CD8-positive, alpha-beta T cell (primary cell): ENCODE measurements at regions of chr17 and their contacts with region 1.

Region 1: DNA sequence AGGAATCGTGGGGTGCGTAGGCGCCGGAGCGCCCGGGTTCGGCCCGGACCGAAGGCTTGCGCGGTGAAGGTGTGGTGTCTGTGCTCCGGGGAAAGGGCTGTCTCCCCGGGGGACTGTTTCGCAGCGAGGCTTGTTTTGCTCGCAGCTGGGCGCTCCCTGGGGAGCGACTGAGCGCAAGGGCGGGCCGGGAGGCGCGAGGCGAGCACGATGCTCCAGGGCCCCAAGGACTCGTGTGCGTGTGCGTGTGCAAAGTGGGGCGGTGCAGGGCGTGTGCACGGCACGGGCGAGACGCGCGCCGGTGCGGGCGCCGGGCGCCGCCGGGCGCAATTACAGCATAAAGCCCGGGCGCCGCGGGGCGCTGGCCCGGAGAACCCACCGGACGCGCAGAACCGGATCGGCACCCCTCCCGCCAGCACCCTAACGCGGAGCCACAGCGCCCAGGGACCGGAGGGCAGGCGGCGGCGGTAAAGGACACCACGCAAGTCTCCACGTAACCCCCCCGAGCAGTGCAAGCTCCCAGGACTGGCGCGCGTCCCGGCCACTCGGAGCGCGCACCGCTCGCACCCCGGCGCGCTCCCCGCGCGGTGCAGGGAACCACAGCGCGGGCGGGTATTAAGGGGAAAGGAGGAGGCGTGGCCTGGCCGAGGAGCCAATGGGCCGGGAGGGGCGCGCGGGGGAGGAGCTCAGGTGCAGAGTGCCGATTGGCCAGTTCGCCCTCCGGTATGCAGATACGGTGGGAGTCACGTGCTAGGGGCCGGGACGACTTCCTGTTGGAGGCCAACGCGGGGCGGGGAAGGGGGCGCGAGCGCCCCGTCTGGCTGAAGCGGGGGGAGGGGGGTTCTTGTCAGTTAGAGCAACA is at the start of gene TNRC6C:
- DNase-seq: peak; percentile 99 to 100 (median 100)
- ATAC-seq: peak; percentile 86
- H3K4me3 ChIP-seq: peak within 1 kb of the TSS; percentile 74 to 81
- H3K4me3 Mint-ChIP-seq: peak within 1 kb of the TSS; percentile 97
- H3K27ac ChIP-seq: peak within 1 kb of the TSS; percentile 57 to 79
- H3K27ac Mint-ChIP-seq: peak within 1 kb of the TSS; percentile 97
- H3K4me1 ChIP-seq: peaks cover 37% of the 10 kb centered on the region
- H3K4me1 Mint-ChIP-seq: peaks cover 38% of the 10 kb centered on the region
- H3K27me3 ChIP-seq: no peaks in the 10 kb centered on the region
- H3K27me3 Mint-ChIP-seq: no peaks in the 10 kb centered on the region
- CTCF ChIP-seq: no peak
- total RNA-seq, gene TNRC6C: 49.3 to 53.8 TPM

Region 2: GRCh38 chr17:77609553-77610517 is 348.3 kb before region 1 on chr17:
- CTCF ChIA-PET with region 1: no interaction called
- POLR2A ChIA-PET with region 1: interaction called, 19 read pairs
- intact Hi-C with region 1: loop called in 1 of 2 experiments (anchors 1 kb)
- DNase-seq: peak; percentile 34 to 88 (median 64)
- ATAC-seq: peak; percentile 96
- H3K4me3 ChIP-seq: peak overlapping the region; percentile 23 to 42
- H3K4me3 Mint-ChIP-seq: peak overlapping the region; percentile 78
- H3K27ac ChIP-seq: peak overlapping the region; percentile 51 to 75
- H3K27ac Mint-ChIP-seq: peak overlapping the region; percentile 90
- H3K4me1 ChIP-seq: peaks cover 22% of the 10 kb centered on the region
- H3K4me1 Mint-ChIP-seq: peaks cover 29% of the 10 kb centered on the region
- H3K27me3 ChIP-seq: no peaks in the 10 kb centered on the region
- H3K27me3 Mint-ChIP-seq: no peaks in the 10 kb centered on the region
- CTCF ChIP-seq: no peak

Region 3: DNA sequence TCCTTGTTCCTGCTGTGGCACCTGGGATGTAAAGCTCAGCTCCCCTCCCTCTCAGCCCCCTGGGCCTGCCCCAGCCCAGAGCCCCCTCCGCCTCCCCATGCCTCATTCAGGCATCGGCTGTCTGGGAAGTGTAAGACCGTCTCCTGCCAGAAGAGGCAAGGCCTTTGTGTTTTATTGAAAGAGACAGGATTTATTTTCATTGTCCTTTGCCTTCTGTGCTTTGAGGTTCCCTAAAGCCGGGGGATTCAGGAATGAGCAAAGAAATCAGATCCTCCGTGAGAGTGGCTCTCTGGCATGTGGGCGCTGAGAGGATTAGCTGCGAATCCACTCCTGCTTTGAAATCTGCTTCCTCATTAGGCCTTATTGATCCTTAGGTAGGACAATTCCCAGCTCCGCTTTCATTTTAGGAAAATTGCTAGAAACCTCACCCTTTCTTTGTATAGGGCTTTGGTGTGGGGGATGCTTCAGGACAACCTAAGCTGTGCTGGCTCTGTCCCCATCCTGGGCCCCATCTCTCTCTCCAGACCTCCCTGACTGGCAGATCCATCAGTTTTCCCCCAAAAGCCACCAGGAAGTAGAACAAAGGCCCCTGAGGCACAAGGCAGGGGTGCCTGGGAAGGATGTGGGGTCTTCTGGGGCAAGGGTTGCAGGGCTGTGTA is 211.1 kb before region 1 on chr17:
- CTCF ChIA-PET with region 1: no interaction called
- POLR2A ChIA-PET with region 1: no interaction called
- intact Hi-C with region 1: no loop called
- DNase-seq: no peak
- ATAC-seq: no peak
- H3K4me3 ChIP-seq: no peak overlapping the region
- H3K4me3 Mint-ChIP-seq: no peak overlapping the region
- H3K27ac ChIP-seq: no peak overlapping the region
- H3K27ac Mint-ChIP-seq: no peak overlapping the region
- H3K4me1 ChIP-seq: no peaks in the 10 kb centered on the region
- H3K4me1 Mint-ChIP-seq: no peaks in the 10 kb centered on the region
- H3K27me3 ChIP-seq: no peaks in the 10 kb centered on the region
- H3K27me3 Mint-ChIP-seq: no peaks in the 10 kb centered on the region
- CTCF ChIP-seq: no peak

Region 4: DNA sequence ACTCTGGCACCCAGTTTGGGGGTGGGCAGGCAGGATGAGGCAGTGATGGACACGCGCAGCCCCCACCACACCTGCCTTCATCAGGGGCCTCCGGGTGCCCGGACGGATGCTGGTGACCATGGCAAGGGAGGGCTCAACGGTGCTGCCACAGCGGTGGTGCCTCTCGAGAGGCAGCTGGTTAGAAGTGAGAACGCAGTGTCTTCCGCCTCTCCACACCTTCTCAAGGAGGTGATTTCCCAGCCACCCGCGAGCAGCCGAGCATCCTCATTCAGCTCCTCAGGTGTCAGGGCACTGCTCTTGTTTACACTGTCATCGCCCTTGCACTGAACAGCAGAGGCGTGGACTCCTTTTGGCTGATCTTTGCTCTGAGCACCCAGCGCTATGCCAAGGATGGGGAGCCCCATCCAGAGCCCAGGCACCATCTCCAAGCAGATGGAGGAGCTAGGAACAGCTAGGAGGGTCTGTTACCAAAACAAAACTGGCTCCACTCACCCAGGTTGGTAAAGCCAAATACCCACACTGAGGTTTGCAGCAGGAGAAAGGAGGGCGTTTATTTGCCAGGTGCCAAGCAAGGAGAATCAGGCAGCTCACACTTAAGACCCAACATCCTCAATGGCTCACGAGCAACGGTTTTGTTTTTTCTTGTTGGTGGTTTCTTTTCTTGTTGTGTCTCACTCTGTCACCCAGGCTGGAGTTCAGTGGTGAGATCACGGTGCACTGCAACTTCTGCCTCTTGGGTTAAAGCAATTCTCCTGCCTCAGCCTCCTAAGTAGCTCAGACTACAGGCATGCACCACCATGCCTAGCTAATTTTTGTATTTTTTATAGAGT is 173.9 kb before region 1 on chr17:
- CTCF ChIA-PET with region 1: no interaction called
- POLR2A ChIA-PET with region 1: interaction called, 25 read pairs
- intact Hi-C with region 1: no loop called
- DNase-seq: peak; percentile 54 to 95 (median 70)
- ATAC-seq: peak; percentile 89
- H3K4me3 ChIP-seq: peak overlapping the region in 1 of 2 experiments; percentile 14
- H3K4me3 Mint-ChIP-seq: peak overlapping the region; percentile 60
- H3K27ac ChIP-seq: peak overlapping the region; percentile 65 to 89
- H3K27ac Mint-ChIP-seq: peak overlapping the region; percentile 94
- H3K4me1 ChIP-seq: peaks cover 15% of the 10 kb centered on the region
- H3K4me1 Mint-ChIP-seq: peaks cover 23% of the 10 kb centered on the region
- H3K27me3 ChIP-seq: no peaks in the 10 kb centered on the region
- H3K27me3 Mint-ChIP-seq: no peaks in the 10 kb centered on the region
- CTCF ChIP-seq: no peak

Region 5: GRCh38 chr17:77887464-77888241 is 70.4 kb before region 1 on chr17:
- CTCF ChIA-PET with region 1: interaction called, 7 read pairs
- POLR2A ChIA-PET with region 1: interaction called, 138 read pairs
- intact Hi-C with region 1: loop called (anchors 1 kb)
- DNase-seq: peak; percentile 64 to 96 (median 84)
- ATAC-seq: peak; percentile 93
- H3K4me3 ChIP-seq: peak overlapping the region; percentile 54 to 66
- H3K4me3 Mint-ChIP-seq: peak overlapping the region; percentile 92
- H3K27ac ChIP-seq: peak overlapping the region; percentile 87 to 90
- H3K27ac Mint-ChIP-seq: peak overlapping the region; percentile 99
- H3K4me1 ChIP-seq: peaks cover 41% of the 10 kb centered on the region
- H3K4me1 Mint-ChIP-seq: peaks cover 59% of the 10 kb centered on the region
- H3K27me3 ChIP-seq: no peaks in the 10 kb centered on the region
- H3K27me3 Mint-ChIP-seq: no peaks in the 10 kb centered on the region
- CTCF ChIP-seq: no peak

Region 6: GRCh38 chr17:77968788-77969187 is 10.7 kb after region 1 on chr17:
- CTCF ChIA-PET with region 1: interaction called, 4 read pairs
- POLR2A ChIA-PET with region 1: interaction called, 24 read pairs
- intact Hi-C with region 1: no loop called
- DNase-seq: no peak
- ATAC-seq: no peak
- H3K4me3 ChIP-seq: no peak overlapping the region
- H3K4me3 Mint-ChIP-seq: no peak overlapping the region
- H3K27ac ChIP-seq: no peak overlapping the region
- H3K27ac Mint-ChIP-seq: no peak overlapping the region
- H3K4me1 ChIP-seq: peaks cover 73% of the 10 kb centered on the region
- H3K4me1 Mint-ChIP-seq: peaks cover 84% of the 10 kb centered on the region
- H3K27me3 ChIP-seq: no peaks in the 10 kb centered on the region
- H3K27me3 Mint-ChIP-seq: no peaks in the 10 kb centered on the region
- CTCF ChIP-seq: no peak

Region 7: DNA sequence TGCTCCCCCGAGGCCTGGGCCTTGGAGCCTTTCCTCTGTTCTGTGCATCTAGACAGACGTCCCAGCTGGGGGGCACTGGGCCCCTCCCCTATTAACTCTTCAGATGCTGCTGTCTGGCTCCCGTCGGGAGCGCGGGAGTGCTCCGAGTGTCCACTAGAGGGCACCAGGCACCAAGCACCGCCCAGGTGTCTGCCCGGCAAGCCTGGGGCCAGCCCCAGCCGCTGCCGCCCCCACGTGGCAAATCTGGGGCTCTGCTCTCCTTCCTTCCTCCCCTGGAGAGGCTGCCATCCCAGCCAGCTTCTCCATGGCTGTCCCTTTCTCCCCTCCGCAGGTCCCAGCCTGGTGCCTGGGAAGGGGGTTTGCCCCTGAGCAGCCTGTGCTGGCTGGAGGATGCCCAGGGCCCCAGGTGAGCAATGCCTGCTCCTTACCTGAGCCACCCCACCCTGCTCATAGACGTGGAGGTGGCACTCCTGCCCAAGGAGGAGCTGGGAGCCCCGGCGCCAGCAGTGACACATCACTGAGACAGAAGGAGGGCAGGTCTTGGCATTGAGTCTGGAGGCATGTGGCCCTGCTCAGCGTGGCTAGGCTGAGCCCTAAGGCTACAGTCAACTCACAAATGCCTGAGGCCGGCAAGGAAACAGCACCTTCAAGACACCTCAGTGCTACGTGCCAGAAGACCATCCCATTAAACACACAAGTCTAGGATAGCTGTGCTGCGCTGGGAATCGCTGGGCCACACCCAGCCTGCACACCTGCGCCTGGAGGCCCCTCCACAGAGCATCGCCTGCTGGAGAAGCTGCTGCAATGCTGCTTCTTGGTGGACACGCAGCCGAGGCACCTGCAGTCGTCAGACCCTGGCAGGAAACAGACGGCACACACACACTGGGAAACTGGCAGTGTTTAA is 293.1 kb after region 1 on chr17:
- CTCF ChIA-PET with region 1: no interaction called
- POLR2A ChIA-PET with region 1: interaction called, 5 read pairs
- intact Hi-C with region 1: loop called in 1 of 2 experiments (anchors 5 kb)
- DNase-seq: peak; percentile 68 to 89 (median 83)
- ATAC-seq: peak; percentile 35
- H3K4me3 ChIP-seq: peak overlapping the region; percentile 23 to 51
- H3K4me3 Mint-ChIP-seq: peak overlapping the region; percentile 86
- H3K27ac ChIP-seq: peak overlapping the region in 1 of 2 experiments; percentile 56
- H3K27ac Mint-ChIP-seq: peak overlapping the region; percentile 99
- H3K4me1 ChIP-seq: peaks cover 49% of the 10 kb centered on the region
- H3K4me1 Mint-ChIP-seq: peaks cover 48% of the 10 kb centered on the region
- H3K27me3 ChIP-seq: no peaks in the 10 kb centered on the region
- H3K27me3 Mint-ChIP-seq: no peaks in the 10 kb centered on the region
- CTCF ChIP-seq: peak; percentile 99